ENCODE measurements at regions of chr6 and their contacts with region 1.

Region 1: GRCh38 chr6:147506704-147507114 is 1.8 kb upstream of the SAMD5 start:
- DNase-seq: peak; percentile 68 to 86
- H3K4me3 ChIP-seq: peak overlapping the region; percentile 79
- H3K4me3 Mint-ChIP-seq: peak overlapping the region; percentile 87
- H3K27ac Mint-ChIP-seq: no peak overlapping the region
- H3K4me1 ChIP-seq: peaks cover 8% of the 10 kb centered on the region; the same call in 1 of the 2 replicates
- H3K4me1 Mint-ChIP-seq: peaks cover 17% of the 10 kb centered on the region
- H3K27me3 ChIP-seq: no peaks in the 10 kb centered on the region; the same call in 1 of the 2 replicates
- H3K27me3 Mint-ChIP-seq: no peaks in the 10 kb centered on the region
- CTCF ChIP-seq: peak; percentile 82 to 85

Region 2: DNA sequence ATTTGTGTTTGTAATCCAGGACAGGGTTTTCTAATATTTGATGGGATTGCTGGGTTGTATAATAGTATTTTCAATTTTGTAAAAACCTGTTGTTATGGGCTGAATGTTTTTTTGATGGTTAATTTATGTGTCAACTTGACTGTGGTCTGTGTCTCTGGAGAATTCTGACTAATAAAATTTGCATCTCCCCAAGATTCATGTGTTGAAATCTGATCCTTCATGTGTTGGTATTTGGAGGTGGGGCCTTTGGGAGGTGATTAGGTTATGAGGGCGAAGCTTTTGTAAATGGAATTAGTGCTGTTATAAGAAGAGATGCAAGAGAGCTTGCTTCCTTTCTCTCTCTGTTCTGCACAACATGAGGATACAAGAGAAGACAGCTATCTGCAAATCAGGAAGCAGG is 46.9 kb before region 1 on chr6:
- CTCF ChIA-PET with region 1: no interaction called
- POLR2A ChIA-PET with region 1: no interaction called
- intact Hi-C with region 1: no loop called
- DNase-seq: no peak
- H3K4me3 ChIP-seq: no peak overlapping the region
- H3K4me3 Mint-ChIP-seq: no peak overlapping the region
- H3K27ac Mint-ChIP-seq: no peak overlapping the region
- H3K4me1 ChIP-seq: no peaks in the 10 kb centered on the region
- H3K4me1 Mint-ChIP-seq: no peaks in the 10 kb centered on the region
- H3K27me3 ChIP-seq: no peaks in the 10 kb centered on the region
- H3K27me3 Mint-ChIP-seq: peaks cover 18% of the 10 kb centered on the region
- CTCF ChIP-seq: no peak

Region 3: GRCh38 chr6:147642458-147642857 is 135.7 kb after region 1 on chr6:
- CTCF ChIA-PET with region 1: interaction called, 3 read pairs
- POLR2A ChIA-PET with region 1: no interaction called
- intact Hi-C with region 1: loop called (anchors 2 kb)
- DNase-seq: peak; percentile 65 to 66
- H3K4me3 ChIP-seq: no peak overlapping the region
- H3K4me3 Mint-ChIP-seq: peak overlapping the region; percentile 40
- H3K27ac Mint-ChIP-seq: peak overlapping the region; percentile 89
- H3K4me1 ChIP-seq: peaks cover 25% of the 10 kb centered on the region
- H3K4me1 Mint-ChIP-seq: peaks cover 31% of the 10 kb centered on the region
- H3K27me3 ChIP-seq: no peaks in the 10 kb centered on the region
- H3K27me3 Mint-ChIP-seq: no peaks in the 10 kb centered on the region
- CTCF ChIP-seq: no peak

Region 4: GRCh38 chr6:147774856-147775255 is 268.1 kb after region 1 on chr6:
- CTCF ChIA-PET with region 1: no interaction called
- POLR2A ChIA-PET with region 1: no interaction called
- intact Hi-C with region 1: loop called (anchors 10 kb)
- DNase-seq: no peak
- H3K4me3 ChIP-seq: no peak overlapping the region
- H3K4me3 Mint-ChIP-seq: no peak overlapping the region
- H3K27ac Mint-ChIP-seq: no peak overlapping the region
- H3K4me1 ChIP-seq: peaks cover 4% of the 10 kb centered on the region; the same call in 1 of the 2 replicates
- H3K4me1 Mint-ChIP-seq: peaks cover 7% of the 10 kb centered on the region
- H3K27me3 ChIP-seq: no peaks in the 10 kb centered on the region
- H3K27me3 Mint-ChIP-seq: no peaks in the 10 kb centered on the region
- CTCF ChIP-seq: no peak

Region 5: DNA sequence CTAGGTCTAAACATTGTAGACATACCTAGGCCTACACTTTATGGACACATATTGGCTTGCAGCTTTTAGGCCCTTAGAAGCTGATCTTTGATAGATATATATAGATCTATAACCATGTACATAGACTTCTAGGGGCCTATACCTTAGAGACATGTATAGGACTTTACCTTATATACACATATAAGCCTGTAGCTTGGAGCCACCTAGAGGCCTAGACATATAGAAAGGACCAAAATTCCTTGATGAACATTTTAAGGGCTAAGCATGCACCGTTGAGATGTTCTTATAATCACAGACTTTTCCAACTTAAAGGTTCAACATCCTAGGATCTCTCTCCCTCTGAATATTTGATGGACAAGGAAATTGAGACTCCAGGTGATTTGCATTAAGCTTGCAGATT is 464.3 kb after region 1 on chr6:
- CTCF ChIA-PET with region 1: interaction called, 6 read pairs
- POLR2A ChIA-PET with region 1: no interaction called
- intact Hi-C with region 1: loop called (anchors 1 kb)
- DNase-seq: peak in 1 of 2 experiments; percentile 18
- H3K4me3 ChIP-seq: no peak overlapping the region
- H3K4me3 Mint-ChIP-seq: no peak overlapping the region
- H3K27ac Mint-ChIP-seq: no peak overlapping the region
- H3K4me1 ChIP-seq: peaks cover 25% of the 10 kb centered on the region
- H3K4me1 Mint-ChIP-seq: peaks cover 31% of the 10 kb centered on the region
- H3K27me3 ChIP-seq: no peaks in the 10 kb centered on the region
- H3K27me3 Mint-ChIP-seq: no peaks in the 10 kb centered on the region
- CTCF ChIP-seq: peak in 1 of 2 experiments; percentile 43

Region 6: DNA sequence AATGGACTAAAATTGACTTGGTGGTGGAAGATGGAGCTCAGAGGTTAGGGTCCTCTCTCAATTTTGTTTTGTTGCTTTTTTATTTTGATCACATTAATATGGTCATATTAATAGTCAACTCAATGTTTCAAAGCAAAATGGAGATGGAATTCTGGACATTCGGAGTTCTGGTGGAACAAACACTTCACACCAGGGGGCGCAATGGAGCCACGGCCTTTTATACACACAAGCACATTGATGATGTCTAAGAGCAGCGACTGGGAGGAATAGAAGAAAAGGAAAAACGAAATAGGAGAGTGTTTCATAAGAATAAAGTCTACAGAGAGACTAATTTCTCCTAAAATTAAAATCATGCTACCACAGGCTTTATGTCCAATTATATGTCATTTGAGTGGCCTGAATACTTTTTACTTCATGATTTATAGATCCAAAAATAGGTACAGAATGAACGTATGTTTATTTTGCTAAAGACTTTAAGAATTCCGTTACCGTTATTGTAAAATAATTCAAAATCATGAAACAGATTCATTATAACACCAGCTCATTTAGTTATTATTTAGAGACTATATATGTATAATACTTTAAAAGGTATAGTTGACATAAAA is 638.3 kb after region 1 on chr6:
- CTCF ChIA-PET with region 1: no interaction called
- POLR2A ChIA-PET with region 1: no interaction called
- intact Hi-C with region 1: loop called (anchors 2 kb)
- DNase-seq: peak; percentile 65 to 76
- H3K4me3 ChIP-seq: no peak overlapping the region
- H3K4me3 Mint-ChIP-seq: peak overlapping the region; percentile 50
- H3K27ac Mint-ChIP-seq: no peak overlapping the region
- H3K4me1 ChIP-seq: peaks cover 8% of the 10 kb centered on the region; the same call in 1 of the 2 replicates
- H3K4me1 Mint-ChIP-seq: peaks cover 25% of the 10 kb centered on the region
- H3K27me3 ChIP-seq: no peaks in the 10 kb centered on the region
- H3K27me3 Mint-ChIP-seq: no peaks in the 10 kb centered on the region
- CTCF ChIP-seq: peak; percentile 74 to 80

Region 7: GRCh38 chr6:148250975-148251685 is 744.4 kb after region 1 on chr6:
- CTCF ChIA-PET with region 1: interaction called, 4 read pairs
- POLR2A ChIA-PET with region 1: no interaction called
- intact Hi-C with region 1: loop called (anchors 2 kb)
- DNase-seq: peak in 1 of 2 experiments; percentile 21
- H3K4me3 ChIP-seq: no peak overlapping the region
- H3K4me3 Mint-ChIP-seq: no peak overlapping the region
- H3K27ac Mint-ChIP-seq: no peak overlapping the region
- H3K4me1 ChIP-seq: no peaks in the 10 kb centered on the region
- H3K4me1 Mint-ChIP-seq: no peaks in the 10 kb centered on the region
- H3K27me3 ChIP-seq: no peaks in the 10 kb centered on the region
- H3K27me3 Mint-ChIP-seq: no peaks in the 10 kb centered on the region
- CTCF ChIP-seq: peak; percentile 33 to 51